WTC11 (cell line): ENCODE measurements at regions of chr16 and their contacts with region 1.

Region 1: DNA sequence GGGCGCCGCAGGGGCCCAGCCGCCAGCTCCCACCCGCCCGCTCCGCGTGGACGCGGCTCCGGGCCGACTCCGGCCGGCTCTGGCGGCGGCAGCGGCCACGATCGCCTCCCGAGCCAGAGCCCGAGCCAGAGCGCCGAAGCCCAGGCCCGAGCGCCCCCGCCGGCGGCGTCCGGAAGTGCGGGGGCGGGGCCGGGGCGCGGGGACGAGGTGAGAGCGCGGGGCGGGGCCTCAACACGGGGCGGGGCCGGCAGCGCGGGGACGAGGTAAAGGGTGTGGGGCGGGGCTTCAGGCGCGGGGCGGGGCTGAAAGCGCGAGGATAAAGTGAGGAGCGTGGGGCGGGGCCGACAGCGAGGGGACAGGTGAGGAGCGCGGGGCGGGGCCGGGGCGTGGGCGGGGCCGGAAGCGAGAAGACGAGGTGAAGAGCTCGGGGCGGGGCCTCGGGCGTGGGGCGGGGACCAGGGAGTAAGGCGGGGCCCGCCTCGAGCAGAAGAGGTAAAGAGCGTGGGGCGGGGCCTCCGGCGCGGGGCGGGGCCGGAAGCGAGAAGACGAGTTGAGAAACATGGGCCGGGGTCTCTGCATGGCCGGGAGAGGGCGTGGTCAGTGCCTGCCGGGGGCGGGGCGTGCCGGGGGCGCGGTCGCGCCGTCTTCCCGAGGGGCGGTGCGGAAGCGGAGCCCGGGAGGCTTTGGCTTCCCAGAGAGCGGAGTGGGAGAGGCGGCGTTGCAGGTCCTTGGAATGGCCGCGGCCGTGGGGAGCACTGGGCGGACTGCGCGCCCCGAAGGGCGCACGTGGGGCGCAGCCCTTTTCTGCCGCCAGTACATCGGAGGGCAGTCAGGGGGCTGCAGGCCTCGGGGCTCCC is at the start of gene AXIN1:
- DNase-seq: peak; percentile 100
- ATAC-seq: peak; percentile 90
- H3K4me3 Mint-ChIP-seq: peak within 1 kb of the TSS; percentile 76
- H3K27ac Mint-ChIP-seq: no peak within 1 kb of the TSS
- H3K4me1 Mint-ChIP-seq: peaks cover 6% of the 10 kb centered on the region
- H3K27me3 Mint-ChIP-seq: no peaks in the 10 kb centered on the region; the same call in 1 of the 2 replicates
- CTCF ChIP-seq: peak; percentile 52
- total RNA-seq, gene AXIN1: 48.0 to 50.3 TPM (median 48.9 TPM) in 3 replicates

Region 2: DNA sequence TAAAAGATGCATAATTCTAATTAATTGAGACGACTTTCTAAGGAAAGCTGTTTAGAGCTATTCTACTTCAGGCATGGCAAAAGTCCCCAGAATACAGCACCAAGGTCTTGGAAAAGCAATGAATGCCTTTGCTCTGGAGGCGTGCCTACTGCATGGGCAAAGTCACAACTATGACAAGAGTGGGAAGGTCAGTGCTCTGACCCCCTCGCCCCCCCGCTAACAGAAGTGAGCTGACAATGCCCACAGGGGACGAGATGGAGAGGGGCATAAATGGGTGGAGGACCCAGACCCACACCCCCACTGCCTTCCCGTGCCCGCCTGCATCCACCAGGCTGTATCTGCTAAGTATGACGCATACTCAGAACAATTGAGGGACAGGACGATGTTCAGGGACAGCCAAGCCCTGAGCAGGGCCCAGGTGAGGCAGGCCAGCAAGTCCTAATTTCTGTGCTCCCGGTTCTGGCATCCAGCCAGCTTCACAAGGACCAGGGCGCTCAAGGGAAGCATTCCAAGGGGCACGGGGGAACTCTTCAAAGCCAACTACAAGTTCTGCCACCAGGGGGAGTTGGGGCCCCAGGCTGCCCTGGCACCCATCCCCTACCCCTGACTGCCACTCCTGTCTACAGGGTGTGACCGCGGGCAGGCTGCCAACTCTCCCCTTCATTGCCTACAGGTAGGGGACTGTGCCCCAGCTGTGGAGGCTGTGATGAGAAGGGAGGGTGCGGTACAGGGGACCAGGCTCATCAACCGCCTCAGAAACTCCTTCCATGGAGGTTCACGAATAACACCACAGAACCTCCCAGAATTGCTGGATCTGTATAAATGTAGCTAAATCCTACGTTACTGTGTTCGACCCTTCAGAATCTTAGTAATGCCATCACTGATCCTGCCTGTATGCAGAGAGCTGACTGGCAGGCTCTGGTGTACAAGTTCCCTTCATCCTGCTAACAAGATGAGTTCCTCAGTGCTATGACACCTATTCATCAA is 235.1 kb before region 1 on chr16:
- CTCF ChIA-PET with region 1: interaction called, 17 read pairs
- POLR2A ChIA-PET with region 1: no interaction called
- DNase-seq: peak; percentile 84
- ATAC-seq: peak; percentile 97
- H3K4me3 Mint-ChIP-seq: no peak overlapping the region
- H3K27ac Mint-ChIP-seq: no peak overlapping the region
- H3K4me1 Mint-ChIP-seq: peaks cover 5% of the 10 kb centered on the region
- H3K27me3 Mint-ChIP-seq: no peaks in the 10 kb centered on the region
- CTCF ChIP-seq: peak; percentile 92

Region 3: GRCh38 chr16:309476-309875 is 43.3 kb before region 1 on chr16:
- CTCF ChIA-PET with region 1: interaction called, 10 read pairs
- POLR2A ChIA-PET with region 1: no interaction called
- DNase-seq: no peak
- ATAC-seq: peak; percentile 75
- H3K4me3 Mint-ChIP-seq: no peak overlapping the region
- H3K27ac Mint-ChIP-seq: peak overlapping the region; percentile 94
- H3K4me1 Mint-ChIP-seq: no peaks in the 10 kb centered on the region
- H3K27me3 Mint-ChIP-seq: no peaks in the 10 kb centered on the region
- CTCF ChIP-seq: no peak

Region 4: DNA sequence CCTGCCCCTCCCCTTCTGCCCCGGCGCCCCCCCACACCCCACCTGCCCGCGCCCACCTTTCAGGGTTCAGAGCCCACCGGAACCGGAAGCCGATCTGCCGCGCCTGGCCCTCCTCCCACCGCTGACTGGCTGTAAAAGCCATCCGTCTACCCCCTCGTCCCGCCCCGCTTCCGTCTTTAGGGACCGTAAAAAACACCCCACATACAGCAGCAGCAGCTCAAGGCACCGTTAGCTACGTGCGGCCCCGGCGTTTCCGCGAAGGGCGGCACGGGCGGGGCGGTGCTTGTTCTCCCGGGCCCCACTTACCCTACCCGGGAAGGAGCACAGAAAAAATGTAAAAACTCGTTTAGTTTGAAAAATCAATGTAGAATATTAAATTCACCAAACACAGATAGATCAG is 17.7 kb after region 1 on chr16 and contains the start of gene MRPL28:
- CTCF ChIA-PET with region 1: interaction called, 17 read pairs
- POLR2A ChIA-PET with region 1: no interaction called
- DNase-seq: peak; percentile 96
- ATAC-seq: peak; percentile 90
- H3K4me3 Mint-ChIP-seq: peak within 1 kb of the TSS; percentile 78
- H3K27ac Mint-ChIP-seq: peak within 1 kb of the TSS; percentile 96
- H3K4me1 Mint-ChIP-seq: peaks cover 11% of the 10 kb centered on the region
- H3K27me3 Mint-ChIP-seq: no peaks in the 10 kb centered on the region
- CTCF ChIP-seq: no peak
- total RNA-seq, gene MRPL28: 119 to 144 TPM (median 140 TPM) in 3 replicates

Region 5: DNA sequence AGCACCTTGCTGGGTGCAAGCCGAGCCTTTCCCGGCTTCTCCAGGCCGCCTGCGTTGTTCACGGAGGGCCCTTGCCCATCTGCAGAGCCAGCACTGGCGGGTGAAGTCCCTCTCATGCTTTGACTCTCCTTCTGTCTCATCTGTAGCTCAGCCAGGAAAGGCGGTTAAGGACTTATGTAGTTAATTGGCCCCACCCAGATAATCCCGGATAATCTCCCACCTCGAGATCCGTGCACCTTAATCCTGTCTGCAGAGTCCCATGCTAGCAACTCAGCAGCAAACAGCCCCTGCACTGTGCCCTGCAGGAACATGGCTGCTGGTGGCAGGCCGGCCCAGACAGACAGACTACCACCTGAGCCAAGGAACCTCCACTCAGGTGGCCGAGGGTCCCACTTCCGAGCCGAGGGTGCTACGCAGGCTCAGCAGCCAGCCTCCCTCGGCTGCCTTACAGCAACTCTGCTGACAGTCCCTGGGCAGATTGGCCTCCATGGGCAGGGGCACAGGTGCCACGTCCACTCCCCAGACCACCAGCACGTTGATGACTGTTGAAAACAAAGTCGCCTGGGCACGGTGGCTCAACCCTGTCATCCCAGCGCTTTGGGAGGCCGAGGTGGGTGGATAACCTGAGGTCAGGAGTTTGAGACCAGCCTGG is 254.0 kb after region 1 on chr16:
- CTCF ChIA-PET with region 1: no interaction called
- POLR2A ChIA-PET with region 1: no interaction called
- DNase-seq: no peak
- ATAC-seq: no peak
- H3K4me3 Mint-ChIP-seq: no peak overlapping the region
- H3K27ac Mint-ChIP-seq: no peak overlapping the region
- H3K4me1 Mint-ChIP-seq: peaks cover 8% of the 10 kb centered on the region
- H3K27me3 Mint-ChIP-seq: no peaks in the 10 kb centered on the region
- CTCF ChIP-seq: no peak